ENCODE measurements at regions of chr18 and their contacts with region 1.

Region 1: GRCh38 chr18:32470713-32471633 is at the start of gene GAREM1:
- DNase-seq: peak; percentile 96
- H3K4me3 Mint-ChIP-seq: peak within 1 kb of the TSS; percentile 80
- H3K27ac Mint-ChIP-seq: peak within 1 kb of the TSS; percentile 48
- H3K4me1 Mint-ChIP-seq: peaks cover 51% of the 10 kb centered on the region
- H3K27me3 Mint-ChIP-seq: no peaks in the 10 kb centered on the region
- CTCF ChIP-seq: peak; percentile 62
- total RNA-seq, gene GAREM1: 17.0 and 19.3 TPM in 2 replicates

Region 2: GRCh38 chr18:32243358-32243757 is 227.6 kb before region 1 on chr18:
- CTCF ChIA-PET with region 1: no interaction called
- intact Hi-C with region 1: no loop called
- DNase-seq: no peak
- H3K4me3 Mint-ChIP-seq: no peak overlapping the region
- H3K27ac Mint-ChIP-seq: no peak overlapping the region
- H3K4me1 Mint-ChIP-seq: no peaks in the 10 kb centered on the region
- H3K27me3 Mint-ChIP-seq: peaks cover under 1% of the 10 kb centered on the region
- CTCF ChIP-seq: no peak

Region 3: GRCh38 chr18:32271672-32272208 is 199.2 kb before region 1 on chr18:
- CTCF ChIA-PET with region 1: interaction called, 43 read pairs
- intact Hi-C with region 1: loop called (anchors 5 kb)
- DNase-seq: peak; percentile 61
- H3K4me3 Mint-ChIP-seq: no peak overlapping the region
- H3K27ac Mint-ChIP-seq: no peak overlapping the region
- H3K4me1 Mint-ChIP-seq: peaks cover 17% of the 10 kb centered on the region
- H3K27me3 Mint-ChIP-seq: no peaks in the 10 kb centered on the region
- CTCF ChIP-seq: peak; percentile 65

Region 4: DNA sequence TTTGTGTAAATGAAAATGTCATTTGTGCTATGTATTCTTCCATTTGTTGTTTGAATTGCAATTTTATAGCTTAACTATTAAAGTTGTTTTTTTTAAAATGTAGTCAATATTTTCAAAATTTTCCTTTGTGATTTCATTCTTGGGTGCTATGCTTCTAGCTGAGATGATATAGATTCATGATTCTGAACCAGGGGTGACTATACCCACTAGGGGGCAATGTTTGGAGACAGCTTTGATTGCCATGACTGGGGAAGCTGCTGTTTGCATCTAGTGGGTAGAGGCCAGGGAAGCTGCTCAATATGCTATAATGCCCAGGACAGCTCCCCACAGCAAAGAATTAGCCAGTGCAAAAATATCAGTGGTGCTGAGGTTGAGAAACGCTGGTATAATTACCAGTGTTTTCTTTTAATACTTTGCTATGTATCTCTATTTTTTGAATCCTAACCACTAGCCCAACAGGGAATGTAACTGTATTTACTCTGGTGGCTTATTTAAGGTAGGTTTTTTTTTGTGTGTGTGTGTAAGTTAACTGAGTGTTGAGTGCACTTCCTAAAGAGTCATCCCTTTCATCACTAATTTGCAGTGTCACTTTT is 181.4 kb before region 1 on chr18:
- CTCF ChIA-PET with region 1: interaction called, 44 read pairs
- intact Hi-C with region 1: loop called (anchors 5 kb)
- DNase-seq: peak; percentile 77
- H3K4me3 Mint-ChIP-seq: no peak overlapping the region
- H3K27ac Mint-ChIP-seq: no peak overlapping the region
- H3K4me1 Mint-ChIP-seq: no peaks in the 10 kb centered on the region
- H3K27me3 Mint-ChIP-seq: no peaks in the 10 kb centered on the region
- CTCF ChIP-seq: peak; percentile 57

Region 5: GRCh38 chr18:32383050-32383819 is 87.7 kb before region 1 on chr18:
- CTCF ChIA-PET with region 1: interaction called, 7 read pairs
- intact Hi-C with region 1: loop called (anchors 2 kb)
- DNase-seq: peak; percentile 53
- H3K4me3 Mint-ChIP-seq: peak overlapping the region; percentile 43
- H3K27ac Mint-ChIP-seq: peak overlapping the region; percentile 82
- H3K4me1 Mint-ChIP-seq: peaks cover 64% of the 10 kb centered on the region
- H3K27me3 Mint-ChIP-seq: no peaks in the 10 kb centered on the region
- CTCF ChIP-seq: no peak

Region 6: GRCh38 chr18:32552421-32553030 is 81.6 kb after region 1 on chr18:
- CTCF ChIA-PET with region 1: interaction called, 12 read pairs
- intact Hi-C with region 1: loop called (anchors 5 kb)
- DNase-seq: peak; percentile 83
- H3K4me3 Mint-ChIP-seq: no peak overlapping the region
- H3K27ac Mint-ChIP-seq: no peak overlapping the region
- H3K4me1 Mint-ChIP-seq: peaks cover 12% of the 10 kb centered on the region
- H3K27me3 Mint-ChIP-seq: no peaks in the 10 kb centered on the region
- CTCF ChIP-seq: peak; percentile 76

Region 7: GRCh38 chr18:32566960-32567359 is 96.0 kb after region 1 on chr18:
- CTCF ChIA-PET with region 1: no interaction called
- intact Hi-C with region 1: no loop called
- DNase-seq: no peak
- H3K4me3 Mint-ChIP-seq: no peak overlapping the region
- H3K27ac Mint-ChIP-seq: no peak overlapping the region
- H3K4me1 Mint-ChIP-seq: no peaks in the 10 kb centered on the region
- H3K27me3 Mint-ChIP-seq: no peaks in the 10 kb centered on the region
- CTCF ChIP-seq: no peak

Region 8: GRCh38 chr18:32707147-32707546 is 236.2 kb after region 1 on chr18:
- CTCF ChIA-PET with region 1: no interaction called
- intact Hi-C with region 1: no loop called
- DNase-seq: peak; percentile 5
- H3K4me3 Mint-ChIP-seq: no peak overlapping the region
- H3K27ac Mint-ChIP-seq: no peak overlapping the region
- H3K4me1 Mint-ChIP-seq: peaks cover 7% of the 10 kb centered on the region
- H3K27me3 Mint-ChIP-seq: no peaks in the 10 kb centered on the region
- CTCF ChIP-seq: no peak

Measured in Calu3 (cell line).